ENCODE measurements at regions of chr1 and their contacts with region 1.

Region 1: DNA sequence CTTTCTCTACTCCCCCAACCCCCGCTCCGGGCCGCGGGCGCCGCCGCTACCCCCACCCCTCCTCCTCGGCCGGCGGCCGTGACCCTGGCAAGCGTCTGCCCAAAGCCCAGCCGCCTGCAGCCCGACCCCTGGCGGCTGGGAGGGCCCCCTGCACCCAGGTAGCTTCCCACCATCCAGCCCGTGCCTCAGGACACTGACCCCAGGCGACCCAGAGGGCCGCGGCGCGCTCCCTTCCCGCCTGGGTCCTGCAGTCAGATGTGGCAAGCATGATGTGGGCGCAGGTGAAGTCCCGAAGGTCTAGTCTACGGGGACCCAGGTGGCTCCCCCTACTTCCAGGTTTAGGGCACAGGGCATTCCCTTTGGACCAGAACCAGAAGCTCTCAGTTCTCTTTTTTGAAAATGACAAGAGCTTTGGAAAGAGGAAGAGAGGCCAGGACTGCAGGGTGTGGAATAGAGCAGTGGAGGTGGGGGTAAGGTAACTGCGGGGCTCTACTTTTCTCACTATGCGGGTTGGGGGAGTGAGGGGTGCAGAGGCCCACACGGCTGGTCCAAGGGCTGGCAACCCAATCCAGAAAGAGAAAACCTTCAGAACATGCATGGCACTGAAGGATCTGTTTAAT is at the start of gene DENND4B:
- DNase-seq: peak; percentile 84
- total RNA-seq, gene DENND4B: 7.8 and 9.3 TPM in 2 replicates

Region 2: DNA sequence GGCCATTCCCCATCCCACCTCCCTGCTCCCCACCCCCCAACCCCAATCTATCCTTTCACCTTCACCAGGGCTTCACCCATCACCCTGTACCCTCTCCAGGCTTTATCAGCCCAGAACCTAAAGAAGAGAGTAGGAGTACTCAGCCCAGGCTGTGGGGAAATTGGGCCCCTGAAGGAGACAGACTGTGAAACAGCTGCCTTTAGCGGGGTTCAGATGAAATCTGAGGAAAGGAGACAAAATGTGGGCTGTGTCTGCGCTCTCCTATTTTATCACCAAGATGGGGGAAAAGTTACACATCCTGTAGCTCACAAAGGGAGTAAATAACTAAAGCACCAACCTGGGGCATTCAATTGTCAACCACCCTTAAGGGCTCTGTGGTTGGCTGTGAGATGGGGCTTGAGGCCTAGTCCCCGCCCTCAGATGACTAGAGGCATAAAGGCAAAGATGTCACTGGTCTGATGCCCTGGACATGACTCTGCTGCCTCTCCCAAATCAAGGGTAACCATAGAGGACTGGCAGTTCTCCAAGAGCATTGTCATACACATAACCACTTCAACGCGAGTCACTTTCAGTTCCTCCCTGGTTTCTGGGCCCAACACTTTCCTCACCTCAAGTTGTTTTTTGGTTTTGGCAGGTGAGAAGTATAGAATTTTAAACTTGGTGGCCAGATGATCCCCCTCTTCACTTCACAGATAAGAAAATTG is 141.5 kb before region 1 on chr1:
- in situ Hi-C with region 1: loop called (anchors 25 kb)
- DNase-seq: no peak